CD8-positive, alpha-beta T cell (primary cell): ENCODE measurements at regions of chr6 and their contacts with region 1.

Region 1: GRCh38 chr6:89977808-89978748 is 83.8 kb downstream of the GJA10 start:
- DNase-seq: no peak
- ATAC-seq: no peak
- H3K4me3 ChIP-seq: no peak overlapping the region
- H3K4me3 Mint-ChIP-seq: no peak overlapping the region
- H3K27ac ChIP-seq: no peak overlapping the region
- H3K27ac Mint-ChIP-seq: no peak overlapping the region
- H3K4me1 ChIP-seq: peaks cover 43% of the 10 kb centered on the region
- H3K4me1 Mint-ChIP-seq: peaks cover 49% of the 10 kb centered on the region
- H3K27me3 ChIP-seq: no peaks in the 10 kb centered on the region
- H3K27me3 Mint-ChIP-seq: no peaks in the 10 kb centered on the region
- CTCF ChIP-seq: no peak

Region 2: GRCh38 chr6:88761237-88762031 is 1216.6 kb before region 1 on chr6:
- CTCF ChIA-PET with region 1: no interaction called
- POLR2A ChIA-PET with region 1: no interaction called
- intact Hi-C with region 1: no loop called
- DNase-seq: peak in 2 of 9 experiments; percentile 24 to 49
- ATAC-seq: no peak
- H3K4me3 ChIP-seq: no peak overlapping the region
- H3K4me3 Mint-ChIP-seq: no peak overlapping the region
- H3K27ac ChIP-seq: no peak overlapping the region
- H3K27ac Mint-ChIP-seq: no peak overlapping the region
- H3K4me1 ChIP-seq: no peaks in the 10 kb centered on the region
- H3K4me1 Mint-ChIP-seq: peaks cover 5% of the 10 kb centered on the region
- H3K27me3 ChIP-seq: no peaks in the 10 kb centered on the region
- H3K27me3 Mint-ChIP-seq: no peaks in the 10 kb centered on the region
- CTCF ChIP-seq: no peak

Region 3: GRCh38 chr6:89098461-89098860 is 879.6 kb before region 1 on chr6:
- CTCF ChIA-PET with region 1: no interaction called
- POLR2A ChIA-PET with region 1: no interaction called
- intact Hi-C with region 1: no loop called
- DNase-seq: no peak
- ATAC-seq: no peak
- H3K4me3 ChIP-seq: no peak overlapping the region
- H3K4me3 Mint-ChIP-seq: no peak overlapping the region
- H3K27ac ChIP-seq: no peak overlapping the region
- H3K27ac Mint-ChIP-seq: no peak overlapping the region
- H3K4me1 ChIP-seq: no peaks in the 10 kb centered on the region
- H3K4me1 Mint-ChIP-seq: peaks cover 3% of the 10 kb centered on the region
- H3K27me3 ChIP-seq: no peaks in the 10 kb centered on the region
- H3K27me3 Mint-ChIP-seq: no peaks in the 10 kb centered on the region
- CTCF ChIP-seq: no peak

Region 4: DNA sequence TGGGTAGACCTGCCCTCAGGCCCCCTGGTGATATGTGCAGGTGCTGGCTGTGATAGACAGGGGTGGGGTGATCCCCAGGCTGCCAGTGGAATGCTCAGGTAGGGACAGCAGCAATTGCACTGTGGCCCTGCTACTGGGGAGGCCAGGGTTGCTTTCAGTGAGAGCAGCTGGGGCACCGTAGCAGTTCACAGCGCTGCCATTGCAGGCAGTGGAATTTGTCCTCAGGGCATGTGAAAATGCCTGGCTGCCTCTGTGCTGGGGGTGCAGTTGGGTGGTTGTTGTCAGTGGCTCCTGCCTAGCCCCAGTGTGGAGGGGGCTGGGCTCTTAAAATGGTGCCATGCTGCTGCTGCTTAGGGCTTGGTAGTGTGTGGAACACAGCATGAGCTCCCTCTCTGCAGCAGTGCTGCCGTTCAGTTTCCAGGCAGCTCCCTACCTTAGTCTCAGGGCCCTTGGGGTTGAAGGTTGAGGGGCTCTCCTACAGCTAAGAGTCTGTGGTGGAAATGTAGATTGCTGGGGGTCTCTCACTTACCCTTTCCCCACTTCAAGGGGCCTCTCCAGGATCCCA is 60.2 kb before region 1 on chr6:
- CTCF ChIA-PET with region 1: no interaction called
- POLR2A ChIA-PET with region 1: no interaction called
- intact Hi-C with region 1: no loop called
- DNase-seq: no peak
- ATAC-seq: no peak
- H3K4me3 ChIP-seq: no peak overlapping the region
- H3K4me3 Mint-ChIP-seq: no peak overlapping the region
- H3K27ac ChIP-seq: no peak overlapping the region
- H3K27ac Mint-ChIP-seq: no peak overlapping the region
- H3K4me1 ChIP-seq: no peaks in the 10 kb centered on the region
- H3K4me1 Mint-ChIP-seq: peaks cover 4% of the 10 kb centered on the region
- H3K27me3 ChIP-seq: no peaks in the 10 kb centered on the region
- H3K27me3 Mint-ChIP-seq: no peaks in the 10 kb centered on the region
- CTCF ChIP-seq: no peak

Region 5: GRCh38 chr6:90021711-90022110 is 43.6 kb after region 1 on chr6:
- CTCF ChIA-PET with region 1: no interaction called
- POLR2A ChIA-PET with region 1: no interaction called
- intact Hi-C with region 1: loop called in 1 of 2 experiments (anchors 5 kb)
- DNase-seq: no peak
- ATAC-seq: no peak
- H3K4me3 ChIP-seq: no peak overlapping the region
- H3K4me3 Mint-ChIP-seq: no peak overlapping the region
- H3K27ac ChIP-seq: no peak overlapping the region
- H3K27ac Mint-ChIP-seq: no peak overlapping the region
- H3K4me1 ChIP-seq: peaks cover 13% of the 10 kb centered on the region
- H3K4me1 Mint-ChIP-seq: peaks cover 71% of the 10 kb centered on the region
- H3K27me3 ChIP-seq: no peaks in the 10 kb centered on the region
- H3K27me3 Mint-ChIP-seq: no peaks in the 10 kb centered on the region
- CTCF ChIP-seq: no peak